ENCODE measurements at regions of chr1 and their contacts with region 1.

Region 1: DNA sequence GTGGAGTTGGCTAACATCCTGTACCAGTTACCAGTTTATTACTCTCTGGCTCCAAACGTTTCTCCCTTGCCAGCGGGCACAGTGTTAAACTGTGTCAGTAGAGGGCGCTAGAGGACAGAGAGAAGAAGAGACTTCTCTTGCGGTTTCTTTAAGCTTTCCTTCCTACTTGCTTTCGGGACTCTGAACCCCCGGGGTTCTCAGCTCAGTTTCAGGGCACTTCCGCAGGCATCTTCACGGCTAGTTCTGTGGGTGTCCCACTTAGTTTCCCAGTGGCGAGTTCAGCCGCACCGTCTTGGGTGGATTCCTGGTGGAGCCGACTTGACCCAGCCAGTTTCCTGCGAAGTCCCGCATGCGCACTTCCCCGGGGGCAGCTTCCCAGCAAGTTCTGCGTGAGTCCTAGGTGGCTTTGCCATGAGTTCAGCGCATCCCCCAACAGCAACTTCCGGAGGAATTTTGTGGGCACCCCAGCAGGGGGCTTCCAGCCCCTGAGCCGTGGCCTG is 37.9 kb upstream of the BTG2 start:
- DNase-seq: peak; percentile 95
- H3K4me3 ChIP-seq: peak overlapping the region; percentile 55 to 89 (median 89)
- H3K27ac ChIP-seq: no peak overlapping the region
- H3K4me1 ChIP-seq: peaks cover 4% of the 10 kb centered on the region
- H3K27me3 ChIP-seq: no peaks in the 10 kb centered on the region
- CTCF ChIP-seq: peak; percentile 84 to 88
- POLR2A ChIP-seq: peak; percentile 46

Region 2: GRCh38 chr1:203006948-203007871 is 260.2 kb before region 1 on chr1 and contains the start of gene TMEM183A:
- CTCF ChIA-PET with region 1: interaction called, 12 read pairs
- POLR2A ChIA-PET with region 1: no interaction called
- dilution Hi-C with region 1: no loop called
- intact Hi-C with region 1: no loop called
- DNase-seq: peak; percentile 96
- H3K4me3 ChIP-seq: peak within 1 kb of the TSS; percentile 53 to 92 (median 89)
- H3K27ac ChIP-seq: peak within 1 kb of the TSS; percentile 56
- H3K4me1 ChIP-seq: peaks cover 11% of the 10 kb centered on the region
- H3K27me3 ChIP-seq: no peaks in the 10 kb centered on the region
- CTCF ChIP-seq: no peak
- POLR2A ChIP-seq: peak; percentile 94
- total RNA-seq, gene TMEM183A: 59.4 and 65.5 TPM in 2 replicates

Region 3: DNA sequence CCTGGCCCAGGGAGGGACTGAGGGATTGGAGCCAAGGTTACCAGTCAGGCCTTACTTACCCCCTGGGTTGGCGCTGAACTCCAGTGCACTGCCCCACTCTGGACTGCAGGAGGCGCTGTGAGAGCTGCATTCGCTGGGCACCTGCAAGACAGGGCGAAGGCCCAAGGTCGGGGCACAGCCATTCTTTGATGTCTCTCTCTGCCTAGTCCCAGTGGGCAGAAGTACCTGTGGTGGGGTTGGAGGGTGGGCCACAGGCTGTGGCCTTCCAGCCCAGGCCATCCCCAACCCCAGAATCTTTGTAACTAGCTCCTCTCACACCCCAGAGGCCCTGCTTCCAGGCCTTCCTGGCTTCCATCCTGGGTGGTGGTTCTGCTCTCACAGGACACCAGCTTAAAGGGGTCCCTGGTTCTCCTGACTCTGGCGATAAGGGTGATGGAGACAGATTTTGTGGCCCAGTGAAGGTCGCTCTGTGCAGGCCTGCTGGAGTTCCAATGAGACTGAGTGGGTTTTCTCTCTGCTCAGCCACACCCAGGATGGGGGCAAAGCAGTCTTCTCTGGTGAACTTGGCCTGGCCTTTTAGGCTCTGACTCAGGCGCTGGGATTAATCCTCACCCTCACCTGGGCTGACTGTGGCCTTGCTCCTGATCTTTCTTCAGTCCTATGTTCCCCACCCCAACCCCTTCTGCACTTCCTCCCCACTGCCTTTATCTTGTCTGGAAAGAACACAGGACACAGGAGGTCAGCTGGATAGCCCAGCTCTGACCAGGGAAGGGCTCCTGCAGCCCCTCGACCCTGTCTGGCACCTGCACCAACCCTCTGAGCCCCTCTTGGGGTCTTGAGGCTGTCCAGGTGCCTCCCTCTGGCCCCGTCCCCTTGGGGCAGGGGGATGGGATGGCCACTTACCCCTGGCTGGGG is 182.6 kb before region 1 on chr1:
- CTCF ChIA-PET with region 1: interaction called, 11 read pairs
- POLR2A ChIA-PET with region 1: no interaction called
- dilution Hi-C with region 1: no loop called
- intact Hi-C with region 1: no loop called
- DNase-seq: no peak
- H3K4me3 ChIP-seq: no peak overlapping the region
- H3K27ac ChIP-seq: no peak overlapping the region
- H3K4me1 ChIP-seq: no peaks in the 10 kb centered on the region
- H3K27me3 ChIP-seq: peaks cover 6 to 10% of the 10 kb centered on the region in 2 experiments
- CTCF ChIP-seq: peak; percentile 48 to 50
- POLR2A ChIP-seq: no peak

Region 4: GRCh38 chr1:203252678-203253077 is 14.7 kb before region 1 on chr1:
- CTCF ChIA-PET with region 1: interaction called, 13 read pairs
- POLR2A ChIA-PET with region 1: no interaction called
- dilution Hi-C with region 1: no loop called
- intact Hi-C with region 1: no loop called
- DNase-seq: no peak
- H3K4me3 ChIP-seq: no peak overlapping the region
- H3K27ac ChIP-seq: no peak overlapping the region
- H3K4me1 ChIP-seq: no peaks in the 10 kb centered on the region
- H3K27me3 ChIP-seq: peaks cover 13 to 35% of the 10 kb centered on the region in 2 experiments
- CTCF ChIP-seq: no peak
- POLR2A ChIP-seq: no peak

Region 5: DNA sequence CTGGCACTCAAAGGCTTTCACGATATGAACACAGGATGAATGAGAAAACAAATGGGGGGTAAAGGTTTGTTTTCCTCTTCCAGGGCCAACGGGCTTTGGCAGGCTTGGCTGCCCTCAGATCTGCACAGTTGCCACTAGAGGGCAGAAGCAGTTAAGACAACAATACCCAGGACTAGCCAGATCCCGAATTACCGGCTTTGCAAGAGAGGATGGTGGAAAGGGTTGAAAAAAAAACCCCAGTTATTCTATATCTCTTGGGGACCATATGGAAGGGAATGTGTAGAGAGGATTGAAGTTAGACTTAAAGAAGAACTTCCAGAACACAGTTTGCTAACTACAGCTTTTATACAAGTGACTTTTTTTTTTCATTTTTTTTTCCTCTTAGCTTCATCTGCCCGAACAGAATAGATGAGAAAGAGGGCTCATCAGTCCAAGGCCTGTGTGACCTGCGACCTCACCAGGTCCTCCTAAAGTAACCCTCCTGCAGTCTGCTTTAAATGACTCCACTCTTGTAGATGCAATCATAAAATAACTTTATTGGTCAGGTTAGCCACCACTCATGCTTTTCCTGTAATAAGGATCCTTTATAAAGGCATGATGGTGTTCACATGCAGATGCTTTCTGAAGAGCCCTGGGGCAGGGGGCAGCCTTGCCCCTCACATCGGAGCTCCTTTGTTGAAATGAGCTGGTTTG is 72.9 kb after region 1 on chr1:
- CTCF ChIA-PET with region 1: interaction called, 1,014 read pairs
- POLR2A ChIA-PET with region 1: no interaction called
- dilution Hi-C with region 1: no loop called
- intact Hi-C with region 1: loop called (anchors 1 kb)
- DNase-seq: peak; percentile 76
- H3K4me3 ChIP-seq: no peak overlapping the region
- H3K27ac ChIP-seq: no peak overlapping the region
- H3K4me1 ChIP-seq: no peaks in the 10 kb centered on the region
- H3K27me3 ChIP-seq: peaks cover 33 to 42% of the 10 kb centered on the region in 2 experiments
- CTCF ChIP-seq: peak; percentile 82 to 89
- POLR2A ChIP-seq: no peak

Region 6: GRCh38 chr1:203475012-203475981 is 207.9 kb after region 1 on chr1 and contains the start of gene PRELP:
- CTCF ChIA-PET with region 1: interaction called, 10 read pairs
- POLR2A ChIA-PET with region 1: no interaction called
- dilution Hi-C with region 1: no loop called
- intact Hi-C with region 1: no loop called
- DNase-seq: no peak
- H3K4me3 ChIP-seq: no peak within 1 kb of the TSS
- H3K27ac ChIP-seq: no peak within 1 kb of the TSS
- H3K4me1 ChIP-seq: peaks cover 2% of the 10 kb centered on the region
- H3K27me3 ChIP-seq: peaks cover 27 to 38% of the 10 kb centered on the region in 2 experiments
- CTCF ChIP-seq: no peak
- POLR2A ChIP-seq: no peak
- total RNA-seq, gene PRELP: not detected in 2 replicates

Region 7: DNA sequence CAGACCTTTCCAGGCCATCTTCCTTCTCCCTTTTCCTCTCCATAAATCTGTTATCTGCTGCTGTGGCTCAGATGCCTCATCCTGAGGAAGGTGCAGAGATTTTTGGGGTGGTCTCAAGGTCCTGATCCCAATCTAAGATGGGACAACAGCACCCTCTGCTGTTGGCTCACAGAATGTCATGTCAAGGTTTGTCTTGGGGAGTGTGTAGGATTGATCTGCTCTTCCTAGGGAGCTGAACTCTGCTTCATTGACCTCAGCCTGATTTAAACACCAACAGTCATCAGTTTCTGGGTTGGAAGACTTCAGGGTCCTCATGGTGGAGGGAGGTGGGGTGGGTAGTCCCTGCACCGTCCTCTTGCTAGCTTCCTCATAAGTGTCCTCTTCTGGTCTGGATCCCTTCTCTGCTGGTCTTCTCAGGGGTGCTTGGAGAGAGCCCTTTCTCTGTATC is 434.8 kb after region 1 on chr1:
- CTCF ChIA-PET with region 1: interaction called, 12 read pairs
- POLR2A ChIA-PET with region 1: no interaction called
- dilution Hi-C with region 1: no loop called
- intact Hi-C with region 1: loop called (anchors 5 kb)
- DNase-seq: peak; percentile 62
- H3K4me3 ChIP-seq: no peak overlapping the region
- H3K27ac ChIP-seq: no peak overlapping the region
- H3K4me1 ChIP-seq: no peaks in the 10 kb centered on the region
- H3K27me3 ChIP-seq: no peaks in the 10 kb centered on the region
- CTCF ChIP-seq: peak; percentile 71 to 82
- POLR2A ChIP-seq: no peak

Measured in endothelial cell of umbilical vein (primary cell).